Prostate gland (tissue), 2 donors: ENCODE measurements at regions of chr20 and their contacts with region 1.

Region 1: DNA sequence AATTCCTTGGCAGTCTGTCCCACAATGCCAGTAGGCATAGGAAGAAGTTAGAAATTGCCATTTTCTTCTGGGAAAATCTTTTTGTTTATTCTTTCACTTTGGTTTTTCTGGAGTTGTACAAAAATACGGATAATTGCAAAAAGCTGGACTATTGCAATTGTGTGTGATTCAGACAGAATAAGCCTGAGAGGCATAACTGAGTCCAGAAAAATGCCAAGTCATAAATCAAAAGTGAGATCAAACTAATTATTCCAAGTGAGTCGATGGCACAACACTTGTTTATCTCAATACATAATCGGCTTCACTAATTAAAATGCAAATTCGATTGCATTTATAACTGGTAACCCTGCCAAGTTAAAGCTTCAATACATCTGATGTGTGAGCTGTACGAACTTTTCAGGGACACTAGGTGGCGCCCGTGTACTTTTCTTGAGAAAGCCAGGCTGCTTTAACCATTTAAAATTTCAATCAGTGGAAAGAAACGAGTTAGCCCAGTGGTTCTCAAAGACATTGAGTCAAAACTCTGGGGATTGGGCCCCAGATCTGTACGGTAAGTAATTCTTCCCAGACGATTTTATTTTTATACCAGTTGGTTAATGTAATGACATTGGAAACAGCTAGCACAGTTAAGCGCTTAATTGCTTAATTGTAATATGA is 102.6 kb downstream of the LAMP5 start:
- DNase-seq: peak; percentile 65
- H3K4me3 ChIP-seq: no peak overlapping the region
- H3K27ac ChIP-seq: no peak overlapping the region
- H3K4me1 ChIP-seq: no peaks in the 10 kb centered on the region
- H3K27me3 ChIP-seq: no peaks in the 10 kb centered on the region
- CTCF ChIP-seq: peak in 3 of 4 experiments; percentile 74 to 77 (median 76)
- POLR2A ChIP-seq: no peak

Region 2: GRCh38 chr20:9912858-9913434 is 296.0 kb after region 1 on chr20:
- intact Hi-C with region 1: loop called (anchors 5 kb)
- DNase-seq: peak; percentile 35
- H3K4me3 ChIP-seq: no peak overlapping the region
- H3K27ac ChIP-seq: no peak overlapping the region
- H3K4me1 ChIP-seq: no peaks in the 10 kb centered on the region
- H3K27me3 ChIP-seq: no peaks in the 10 kb centered on the region
- CTCF ChIP-seq: peak; percentile 38 to 83 (median 72)
- POLR2A ChIP-seq: no peak